ENCODE measurements at regions of chr2 and their contacts with region 1.

Region 1: DNA sequence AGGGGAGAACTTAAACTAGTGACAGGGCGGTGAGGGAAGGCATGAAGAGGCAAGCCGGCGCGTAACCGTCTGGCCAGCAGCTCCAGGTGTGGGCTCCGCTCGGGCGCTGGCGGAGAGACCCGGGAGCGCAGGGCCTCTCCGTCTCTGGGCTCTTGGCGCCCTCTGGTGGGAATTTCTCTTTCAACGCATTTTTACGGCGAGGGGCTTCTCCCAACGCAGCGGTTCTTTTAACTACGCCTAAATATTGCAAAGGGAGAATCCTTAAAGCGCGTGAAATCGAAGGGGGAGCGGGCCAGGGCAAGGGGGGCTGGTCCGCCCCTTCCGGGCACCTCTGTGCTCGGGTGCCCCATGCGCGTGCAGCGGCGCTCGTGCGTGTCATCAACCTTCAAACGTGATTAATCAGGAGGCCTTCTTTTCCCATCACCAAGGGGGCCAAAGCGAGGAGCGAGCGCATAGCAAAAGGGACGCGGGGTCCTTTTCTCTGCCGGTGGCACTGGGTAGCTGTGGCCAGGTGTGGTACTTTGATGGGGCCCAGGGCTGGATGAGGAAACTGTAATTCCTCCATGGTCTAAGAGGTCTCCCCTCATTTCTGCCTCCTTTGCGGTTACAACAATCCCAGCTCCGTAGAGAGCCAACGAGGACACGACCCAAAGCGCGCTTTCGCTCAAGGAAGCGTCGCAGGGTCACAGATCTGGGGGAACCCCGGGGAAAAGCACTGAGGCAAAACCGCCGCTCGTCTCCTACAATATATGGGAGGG is 762 bp upstream of the GAD1 start:
- DNase-seq: peak in 8 of 9 donors; percentile 33 to 70 (median 58)
- ATAC-seq: peak; percentile 68
- H3K4me3 ChIP-seq: peak overlapping the region; percentile 54
- H3K4me3 Mint-ChIP-seq: peak overlapping the region; percentile 59 to 86 (median 74)
- H3K27ac ChIP-seq: no peak overlapping the region
- H3K27ac Mint-ChIP-seq: peak overlapping the region in 2 of 9 donors; percentile 56 to 79
- H3K4me1 ChIP-seq: peaks cover 37 to 48% of the 10 kb centered on the region in 2 donors
- H3K4me1 Mint-ChIP-seq: peaks cover 30 to 78% (median 56%) of the 10 kb centered on the region in 7 donors
- H3K27me3 ChIP-seq: peaks cover 30 to 44% of the 10 kb centered on the region in 2 donors
- H3K27me3 Mint-ChIP-seq: peaks cover 67 to 84% (median 73%) of the 10 kb centered on the region in 5 donors

Region 2: GRCh38 chr2:169933124-169933711 is 882.7 kb before region 1 on chr2:
- CTCF ChIA-PET with region 1: no interaction called
- POLR2A ChIA-PET with region 1: no interaction called
- intact Hi-C with region 1: loop called in 1 of 2 experiments (anchors 5 kb)
- DNase-seq: peak in 2 of 9 donors; percentile 6 to 9
- ATAC-seq: no peak
- H3K4me3 ChIP-seq: no peak overlapping the region
- H3K4me3 Mint-ChIP-seq: no peak overlapping the region
- H3K27ac ChIP-seq: no peak overlapping the region
- H3K27ac Mint-ChIP-seq: no peak overlapping the region
- H3K4me1 ChIP-seq: no peaks in the 10 kb centered on the region
- H3K4me1 Mint-ChIP-seq: peaks cover 0 to 9% (median 0%) of the 10 kb centered on the region in 7 donors
- H3K27me3 ChIP-seq: no peaks in the 10 kb centered on the region
- H3K27me3 Mint-ChIP-seq: no peaks in the 10 kb centered on the region

Region 3: GRCh38 chr2:170361090-170361936 is 454.6 kb before region 1 on chr2:
- CTCF ChIA-PET with region 1: interaction called, 5 read pairs
- POLR2A ChIA-PET with region 1: no interaction called
- intact Hi-C with region 1: loop called (anchors 1 to 2 kb)
- DNase-seq: peak; percentile 10 to 58 (median 46)
- ATAC-seq: peak; percentile 84
- H3K4me3 ChIP-seq: no peak overlapping the region
- H3K4me3 Mint-ChIP-seq: peak overlapping the region in 3 of 10 donors; percentile 0 to 56 (median 4)
- H3K27ac ChIP-seq: no peak overlapping the region
- H3K27ac Mint-ChIP-seq: peak overlapping the region in 2 of 9 donors; percentile 9 to 75
- H3K4me1 ChIP-seq: peaks cover 0 to 6% of the 10 kb centered on the region in 2 donors
- H3K4me1 Mint-ChIP-seq: peaks cover 3 to 48% (median 8%) of the 10 kb centered on the region in 7 donors
- H3K27me3 ChIP-seq: no peaks in the 10 kb centered on the region
- H3K27me3 Mint-ChIP-seq: peaks cover 0 to 23% (median 11%) of the 10 kb centered on the region in 5 donors

Region 4: DNA sequence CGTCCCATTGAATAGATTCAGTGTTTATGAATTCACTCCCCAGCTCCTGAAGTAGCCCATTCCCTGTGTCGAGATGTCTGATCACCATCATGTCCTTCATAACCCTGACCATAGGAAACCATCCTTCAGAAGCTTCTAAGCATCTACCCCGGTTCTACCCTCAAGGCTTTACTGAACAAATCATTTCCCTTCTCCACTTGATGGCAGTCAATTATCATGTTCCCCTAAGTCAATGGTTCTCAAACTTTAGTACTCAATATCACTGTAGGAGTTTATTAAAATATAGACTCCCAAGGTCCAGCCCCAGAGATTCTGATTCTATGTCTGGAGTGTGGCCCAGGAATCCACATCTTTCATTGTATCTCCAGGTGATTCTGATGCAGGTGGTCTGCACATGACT is 329.2 kb before region 1 on chr2:
- CTCF ChIA-PET with region 1: interaction called, 13 read pairs
- POLR2A ChIA-PET with region 1: no interaction called
- intact Hi-C with region 1: loop called (anchors 1 kb)
- DNase-seq: peak in 5 of 9 donors; percentile 5 to 35 (median 9)
- ATAC-seq: no peak
- H3K4me3 ChIP-seq: no peak overlapping the region
- H3K4me3 Mint-ChIP-seq: no peak overlapping the region
- H3K27ac ChIP-seq: no peak overlapping the region
- H3K27ac Mint-ChIP-seq: no peak overlapping the region
- H3K4me1 ChIP-seq: no peaks in the 10 kb centered on the region
- H3K4me1 Mint-ChIP-seq: peaks cover 0 to 2% (median 0%) of the 10 kb centered on the region in 7 donors
- H3K27me3 ChIP-seq: no peaks in the 10 kb centered on the region
- H3K27me3 Mint-ChIP-seq: peaks cover 4 to 15% (median 9%) of the 10 kb centered on the region in 5 donors

Region 5: GRCh38 chr2:170739048-170739447 is 76.9 kb before region 1 on chr2:
- CTCF ChIA-PET with region 1: interaction called, 3 read pairs
- POLR2A ChIA-PET with region 1: no interaction called
- intact Hi-C with region 1: loop called in 1 of 2 experiments (anchors 5 kb)
- DNase-seq: no peak
- ATAC-seq: no peak
- H3K4me3 ChIP-seq: no peak overlapping the region
- H3K4me3 Mint-ChIP-seq: no peak overlapping the region
- H3K27ac ChIP-seq: no peak overlapping the region
- H3K27ac Mint-ChIP-seq: no peak overlapping the region
- H3K4me1 ChIP-seq: no peaks in the 10 kb centered on the region
- H3K4me1 Mint-ChIP-seq: no peaks in the 10 kb centered on the region
- H3K27me3 ChIP-seq: no peaks in the 10 kb centered on the region
- H3K27me3 Mint-ChIP-seq: peaks cover 10 to 28% (median 18%) of the 10 kb centered on the region in 5 donors

Region 6: DNA sequence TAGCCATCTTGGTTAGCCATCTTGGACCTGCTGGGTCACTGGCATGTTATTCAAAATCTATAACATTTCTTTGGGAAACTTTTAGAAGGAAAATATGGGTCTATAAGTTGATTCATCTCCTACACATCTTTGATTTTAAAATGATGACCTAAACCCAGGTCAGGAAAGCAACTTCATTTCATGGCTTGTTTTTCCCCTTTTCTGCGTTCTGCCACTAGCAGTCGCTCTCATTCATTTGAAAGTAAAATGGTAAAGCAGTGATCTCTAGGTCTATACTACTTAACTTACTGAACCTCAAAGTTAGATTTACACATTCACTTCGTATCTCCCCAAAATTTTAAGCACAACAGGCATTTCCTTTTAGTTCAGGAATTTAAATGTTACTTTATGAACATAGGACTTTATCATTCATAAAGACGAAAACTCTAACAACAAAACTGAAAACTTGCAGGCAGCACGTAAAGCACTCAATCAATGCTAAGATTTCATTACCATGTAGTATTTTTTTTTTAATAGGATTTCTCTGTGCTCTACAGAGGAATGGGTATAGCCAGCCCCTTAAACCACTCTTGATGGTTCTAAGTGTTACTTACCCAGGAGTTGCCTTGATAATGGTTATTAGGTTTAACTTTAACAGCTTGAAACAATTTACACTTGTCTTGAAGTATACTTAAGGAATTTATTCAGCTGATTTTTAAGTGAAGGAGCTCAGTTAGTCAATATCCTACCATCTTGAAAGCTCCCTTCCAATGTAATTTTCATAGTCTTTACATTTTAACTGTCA is 175.7 kb after region 1 on chr2:
- CTCF ChIA-PET with region 1: no interaction called
- POLR2A ChIA-PET with region 1: no interaction called
- intact Hi-C with region 1: no loop called
- DNase-seq: no peak
- ATAC-seq: no peak
- H3K4me3 ChIP-seq: no peak overlapping the region
- H3K4me3 Mint-ChIP-seq: no peak overlapping the region
- H3K27ac ChIP-seq: no peak overlapping the region
- H3K27ac Mint-ChIP-seq: peak overlapping the region in 6 of 9 donors; percentile 15 to 63 (median 36)
- H3K4me1 ChIP-seq: no peaks in the 10 kb centered on the region
- H3K4me1 Mint-ChIP-seq: peaks cover 0 to 19% (median 10%) of the 10 kb centered on the region in 7 donors
- H3K27me3 ChIP-seq: no peaks in the 10 kb centered on the region
- H3K27me3 Mint-ChIP-seq: no peaks in the 10 kb centered on the region

Region 7: GRCh38 chr2:172084734-172085459 is 1269.0 kb after region 1 on chr2:
- CTCF ChIA-PET with region 1: no interaction called
- POLR2A ChIA-PET with region 1: no interaction called
- intact Hi-C with region 1: loop called in 1 of 2 experiments (anchors 5 kb)
- DNase-seq: peak in 5 of 9 donors; percentile 37 to 57 (median 52)
- ATAC-seq: peak; percentile 81
- H3K4me3 ChIP-seq: peak overlapping the region; percentile 15
- H3K4me3 Mint-ChIP-seq: peak overlapping the region; percentile 70 to 85 (median 78)
- H3K27ac ChIP-seq: no peak overlapping the region
- H3K27ac Mint-ChIP-seq: peak overlapping the region in 8 of 9 donors; percentile 14 to 91 (median 84)
- H3K4me1 ChIP-seq: peaks cover 50 to 51% of the 10 kb centered on the region in 2 donors
- H3K4me1 Mint-ChIP-seq: peaks cover 36 to 74% (median 58%) of the 10 kb centered on the region in 7 donors
- H3K27me3 ChIP-seq: peaks cover 81 to 96% of the 10 kb centered on the region in 2 donors
- H3K27me3 Mint-ChIP-seq: peaks cover 80 to 98% (median 88%) of the 10 kb centered on the region in 5 donors

Measured in naive thymus-derived CD4-positive, alpha-beta T cell (primary cell).